Right ventricle myocardium superior (tissue), 1 donor: ENCODE measurements at regions of chr2 and their contacts with region 1.

Region 1: GRCh38 chr2:206693399-206694137 is 24.6 kb downstream of the DYTN start:
- DNase-seq: no peak
- ATAC-seq: peak; percentile 79

Region 2: GRCh38 chr2:206783718-206784117 is 90.2 kb after region 1 on chr2:
- intact Hi-C with region 1: loop called (anchors 5 kb)
- DNase-seq: no peak
- ATAC-seq: no peak